CD4-positive, alpha-beta T cell (primary cell): ENCODE measurements at regions of chr1 and their contacts with region 1.

Region 1: GRCh38 chr1:93629099-93630059 is 52.3 kb downstream of the BCAR3 start:
- DNase-seq: peak in 11 of 14 experiments; percentile 9 to 80 (median 33)
- ATAC-seq: peak; percentile 88
- H3K4me3 ChIP-seq: no peak overlapping the region
- H3K4me3 Mint-ChIP-seq: no peak overlapping the region
- H3K27ac ChIP-seq: no peak overlapping the region
- H3K27ac Mint-ChIP-seq: no peak overlapping the region
- H3K4me1 ChIP-seq: no peaks in the 10 kb centered on the region
- H3K4me1 Mint-ChIP-seq: no peaks in the 10 kb centered on the region
- H3K27me3 ChIP-seq: no peaks in the 10 kb centered on the region
- H3K27me3 Mint-ChIP-seq: no peaks in the 10 kb centered on the region
- CTCF ChIP-seq: peak; percentile 90

Region 2: DNA sequence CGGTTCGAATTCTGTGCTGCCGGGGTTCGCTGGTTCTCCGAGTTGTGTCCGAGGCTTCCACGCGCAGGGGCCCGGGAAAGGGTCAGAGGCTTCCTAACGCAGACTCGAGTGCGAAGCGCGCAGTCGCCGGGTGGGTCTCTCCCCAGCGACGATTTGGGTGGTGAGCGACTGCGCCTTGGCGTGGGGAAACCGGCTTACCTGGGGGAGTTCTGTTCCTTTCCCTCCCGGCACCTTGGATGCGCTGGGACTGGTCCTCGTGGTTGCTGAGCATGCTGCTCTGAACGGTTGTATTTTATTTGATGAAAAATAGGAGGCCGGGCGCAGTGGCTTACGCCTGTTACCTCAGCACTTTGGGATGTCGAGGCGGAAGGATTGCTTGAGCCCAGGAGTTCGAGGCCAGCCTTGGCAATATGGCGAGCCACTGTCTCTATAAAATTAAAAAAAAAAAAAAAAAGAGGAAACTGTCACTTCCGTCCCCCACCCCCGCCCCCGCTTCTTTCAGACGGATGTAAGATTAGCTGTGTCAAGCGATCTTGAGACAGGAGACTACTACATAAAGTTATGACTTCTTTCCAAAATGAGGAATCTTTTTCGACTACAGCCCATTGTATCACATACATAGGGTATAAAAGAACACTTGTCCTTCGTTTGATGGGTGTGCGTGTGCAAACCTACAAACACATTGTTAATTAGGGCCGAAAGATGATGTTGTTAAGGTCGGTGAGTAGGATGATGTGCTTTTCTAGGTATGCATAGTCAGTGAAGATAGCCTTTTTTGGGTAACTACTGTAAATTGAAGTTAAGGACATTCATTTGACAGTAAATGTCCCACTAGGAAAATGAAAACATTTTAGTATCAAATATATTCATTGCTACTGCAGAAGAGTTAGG is 448.4 kb before region 1 on chr1 and contains the start of gene CCDC18:
- CTCF ChIA-PET with region 1: no interaction called
- POLR2A ChIA-PET with region 1: no interaction called
- intact Hi-C with region 1: no loop called
- DNase-seq: peak in 12 of 14 experiments; percentile 24 to 90 (median 47)
- ATAC-seq: peak; percentile 28
- H3K4me3 ChIP-seq: peak within 1 kb of the TSS; percentile 91
- H3K4me3 Mint-ChIP-seq: peak within 1 kb of the TSS; percentile 93
- H3K27ac ChIP-seq: peak within 1 kb of the TSS; percentile 97 to 98
- H3K27ac Mint-ChIP-seq: peak within 1 kb of the TSS; percentile 95
- H3K4me1 ChIP-seq: peaks cover 25% of the 10 kb centered on the region
- H3K4me1 Mint-ChIP-seq: peaks cover 52% of the 10 kb centered on the region
- H3K27me3 ChIP-seq: no peaks in the 10 kb centered on the region
- H3K27me3 Mint-ChIP-seq: no peaks in the 10 kb centered on the region
- CTCF ChIP-seq: no peak
- total RNA-seq, gene CCDC18: 5.4 to 7.0 TPM

Region 3: DNA sequence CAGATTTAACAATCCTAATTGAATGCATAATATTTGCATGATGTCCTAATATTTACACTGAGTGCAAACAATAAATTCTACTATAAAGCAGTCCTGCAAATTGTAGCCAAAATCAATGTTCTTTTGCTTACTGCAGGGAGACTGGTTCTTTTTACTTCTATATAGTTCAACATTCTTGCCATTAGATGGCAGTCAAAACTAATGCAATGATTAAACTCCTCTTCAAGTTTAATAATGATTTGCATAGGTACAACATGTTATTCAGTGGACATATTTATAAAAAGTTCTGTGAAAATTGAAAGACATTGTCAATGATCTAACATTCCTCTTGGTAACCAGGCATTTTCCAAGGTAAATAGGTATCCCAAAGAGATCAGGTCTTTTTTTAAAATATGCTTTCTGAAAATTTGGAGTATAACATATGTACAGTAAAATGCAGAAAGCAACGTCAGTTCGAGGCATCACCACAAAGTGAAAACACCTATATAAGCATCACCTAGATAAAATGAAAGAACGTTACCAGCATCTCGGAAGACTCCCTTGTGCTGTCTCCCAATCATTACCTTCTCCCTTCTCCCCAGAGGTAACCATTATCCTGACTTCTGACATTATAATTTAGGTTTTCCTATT is 191.3 kb before region 1 on chr1:
- CTCF ChIA-PET with region 1: no interaction called
- POLR2A ChIA-PET with region 1: no interaction called
- intact Hi-C with region 1: loop called (anchors 5 kb)
- DNase-seq: peak in 3 of 14 experiments; percentile 52 to 63 (median 60)
- ATAC-seq: peak; percentile 54
- H3K4me3 ChIP-seq: no peak overlapping the region
- H3K4me3 Mint-ChIP-seq: no peak overlapping the region
- H3K27ac ChIP-seq: no peak overlapping the region
- H3K27ac Mint-ChIP-seq: no peak overlapping the region
- H3K4me1 ChIP-seq: no peaks in the 10 kb centered on the region
- H3K4me1 Mint-ChIP-seq: no peaks in the 10 kb centered on the region
- H3K27me3 ChIP-seq: peaks cover 0 to 9% of the 10 kb centered on the region in 2 experiments
- H3K27me3 Mint-ChIP-seq: no peaks in the 10 kb centered on the region
- CTCF ChIP-seq: peak; percentile 77

Region 4: DNA sequence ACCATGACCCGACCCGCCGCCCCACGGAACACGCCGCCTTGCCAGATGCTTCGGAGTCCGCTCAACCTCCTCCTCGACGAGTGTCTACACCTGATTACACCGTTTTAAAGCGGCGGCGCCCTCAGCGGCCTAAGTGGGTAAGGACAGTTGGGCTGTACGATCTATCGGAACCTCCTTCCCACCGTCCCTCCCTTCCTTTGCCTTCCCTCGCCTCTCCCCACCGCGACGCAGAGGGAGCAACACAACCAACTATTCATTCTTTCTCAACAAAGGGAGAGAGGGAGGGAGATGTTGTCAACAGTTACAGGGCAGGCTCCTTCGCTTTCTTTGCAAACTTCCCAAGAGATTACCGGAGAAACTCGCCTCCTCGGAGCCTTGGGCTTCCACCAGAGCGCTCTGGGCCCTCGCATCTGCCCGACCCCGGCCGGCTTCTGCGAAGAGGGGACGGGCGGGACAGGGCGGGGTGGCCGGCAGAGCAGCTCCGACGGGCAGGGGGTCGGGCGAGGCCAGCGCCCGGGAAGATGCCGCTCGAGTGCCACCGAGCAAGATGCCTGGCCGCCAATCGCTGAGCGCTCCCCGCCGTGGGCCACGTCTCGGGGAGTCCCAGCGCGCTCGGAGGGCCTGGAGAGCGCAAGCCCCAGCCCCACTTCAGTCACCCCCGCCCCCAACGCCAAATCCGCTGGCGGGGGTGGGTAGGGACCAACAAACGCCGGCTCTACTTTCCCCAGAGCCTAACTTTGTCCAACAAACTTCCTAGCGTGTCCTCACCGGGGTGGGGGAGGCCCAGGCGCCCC is 51.6 kb after region 1 on chr1:
- CTCF ChIA-PET with region 1: no interaction called
- POLR2A ChIA-PET with region 1: no interaction called
- intact Hi-C with region 1: no loop called
- DNase-seq: peak in 9 of 14 experiments; percentile 4 to 44 (median 15)
- ATAC-seq: peak; percentile 64
- H3K4me3 ChIP-seq: peak overlapping the region; percentile 35
- H3K4me3 Mint-ChIP-seq: peak overlapping the region; percentile 79
- H3K27ac ChIP-seq: no peak overlapping the region
- H3K27ac Mint-ChIP-seq: no peak overlapping the region
- H3K4me1 ChIP-seq: peaks cover 15% of the 10 kb centered on the region
- H3K4me1 Mint-ChIP-seq: peaks cover 9% of the 10 kb centered on the region
- H3K27me3 ChIP-seq: peaks cover 10 to 26% of the 10 kb centered on the region in 2 experiments
- H3K27me3 Mint-ChIP-seq: peaks cover 62% of the 10 kb centered on the region
- CTCF ChIP-seq: no peak

Region 5: GRCh38 chr1:93878889-93879586 is 249.7 kb after region 1 on chr1 and contains the start of gene DNTTIP2:
- CTCF ChIA-PET with region 1: interaction called, 4 read pairs
- POLR2A ChIA-PET with region 1: interaction called, 5 read pairs
- intact Hi-C with region 1: loop called (anchors 1 kb)
- DNase-seq: peak; percentile 78 to 93 (median 82)
- ATAC-seq: peak; percentile 82
- H3K4me3 ChIP-seq: peak within 1 kb of the TSS; percentile 91
- H3K4me3 Mint-ChIP-seq: peak within 1 kb of the TSS; percentile 100
- H3K27ac ChIP-seq: peak within 1 kb of the TSS; percentile 85 to 94
- H3K27ac Mint-ChIP-seq: peak within 1 kb of the TSS; percentile 98
- H3K4me1 ChIP-seq: peaks cover 26% of the 10 kb centered on the region
- H3K4me1 Mint-ChIP-seq: peaks cover 45% of the 10 kb centered on the region
- H3K27me3 ChIP-seq: no peaks in the 10 kb centered on the region
- H3K27me3 Mint-ChIP-seq: no peaks in the 10 kb centered on the region
- CTCF ChIP-seq: no peak
- total RNA-seq, gene DNTTIP2: 110 to 120 TPM

Region 6: DNA sequence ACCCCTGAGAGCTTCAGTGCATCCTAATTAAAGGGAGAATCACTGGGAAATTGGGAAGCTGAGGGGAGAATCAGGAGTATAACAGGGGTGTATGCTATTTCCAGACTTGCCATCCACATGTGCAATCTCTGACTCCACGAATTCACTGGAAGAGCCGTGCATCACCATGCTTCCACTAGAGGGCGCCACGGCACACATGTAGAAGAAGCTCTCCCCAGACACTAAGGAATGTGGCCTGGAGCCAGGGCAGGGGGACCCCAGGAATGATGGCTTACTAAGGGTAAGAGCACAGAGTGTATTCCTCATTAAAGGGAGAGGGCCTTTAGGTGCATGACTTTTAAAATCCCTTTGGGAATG is 410.1 kb after region 1 on chr1:
- CTCF ChIA-PET with region 1: no interaction called
- POLR2A ChIA-PET with region 1: no interaction called
- intact Hi-C with region 1: loop called in 1 of 2 experiments (anchors 5 kb)
- DNase-seq: peak; percentile 17 to 69 (median 36)
- ATAC-seq: no peak
- H3K4me3 ChIP-seq: no peak overlapping the region
- H3K4me3 Mint-ChIP-seq: no peak overlapping the region
- H3K27ac ChIP-seq: no peak overlapping the region
- H3K27ac Mint-ChIP-seq: no peak overlapping the region
- H3K4me1 ChIP-seq: no peaks in the 10 kb centered on the region
- H3K4me1 Mint-ChIP-seq: no peaks in the 10 kb centered on the region
- H3K27me3 ChIP-seq: peaks cover 0 to 6% of the 10 kb centered on the region in 2 experiments
- H3K27me3 Mint-ChIP-seq: peaks cover 40% of the 10 kb centered on the region
- CTCF ChIP-seq: peak; percentile 74

Region 7: GRCh38 chr1:94805912-94806311 is 1176.5 kb after region 1 on chr1:
- CTCF ChIA-PET with region 1: no interaction called
- POLR2A ChIA-PET with region 1: no interaction called
- intact Hi-C with region 1: loop called (anchors 5 to 10 kb)
- DNase-seq: peak in 11 of 14 experiments; percentile 17 to 67 (median 35)
- ATAC-seq: peak; percentile 77
- H3K4me3 ChIP-seq: no peak overlapping the region
- H3K4me3 Mint-ChIP-seq: no peak overlapping the region
- H3K27ac ChIP-seq: no peak overlapping the region
- H3K27ac Mint-ChIP-seq: no peak overlapping the region
- H3K4me1 ChIP-seq: peaks cover 5% of the 10 kb centered on the region
- H3K4me1 Mint-ChIP-seq: peaks cover 6% of the 10 kb centered on the region
- H3K27me3 ChIP-seq: peaks cover 2 to 7% of the 10 kb centered on the region in 2 experiments
- H3K27me3 Mint-ChIP-seq: peaks cover 4% of the 10 kb centered on the region
- CTCF ChIP-seq: peak; percentile 99

Region 8: DNA sequence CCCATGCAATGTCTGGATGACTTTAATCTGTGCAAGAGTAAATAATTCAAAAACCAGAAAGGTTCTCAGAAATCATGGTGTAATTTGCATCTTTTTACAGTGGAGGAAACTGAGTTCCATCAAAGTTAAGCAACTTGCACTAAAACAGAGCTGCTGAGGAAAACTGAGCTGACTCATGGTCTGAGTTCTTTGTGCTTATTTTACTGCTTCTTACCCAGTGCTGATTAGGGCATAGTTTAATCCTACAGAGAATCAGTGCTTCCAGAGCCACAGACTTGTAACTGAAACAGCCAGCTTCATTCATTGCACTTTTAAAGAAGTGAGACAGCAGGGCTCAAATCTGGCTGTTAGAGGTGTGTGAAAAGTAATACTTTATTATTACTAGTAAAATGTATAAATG is 1593.7 kb after region 1 on chr1:
- CTCF ChIA-PET with region 1: no interaction called
- POLR2A ChIA-PET with region 1: no interaction called
- intact Hi-C with region 1: loop called in 1 of 2 experiments (anchors 10 kb)
- DNase-seq: no peak
- ATAC-seq: no peak
- H3K4me3 ChIP-seq: no peak overlapping the region
- H3K4me3 Mint-ChIP-seq: no peak overlapping the region
- H3K27ac ChIP-seq: no peak overlapping the region
- H3K27ac Mint-ChIP-seq: no peak overlapping the region
- H3K4me1 ChIP-seq: no peaks in the 10 kb centered on the region
- H3K4me1 Mint-ChIP-seq: no peaks in the 10 kb centered on the region
- H3K27me3 ChIP-seq: peaks cover 3% of the 10 kb centered on the region in 2 experiments
- H3K27me3 Mint-ChIP-seq: peaks cover 34% of the 10 kb centered on the region
- CTCF ChIP-seq: no peak